Activated CD4-positive, alpha-beta T cell treated with anti-CD3 and anti-CD28 coated beads for 36 hours (primary cell): ENCODE measurements at regions of chr7 and their contacts with region 1.

Region 1: GRCh38 chr7:130912862-130913631 is 179.0 kb upstream of the KLF14 start:
- DNase-seq: peak; percentile 92
- ATAC-seq: peak; percentile 73
- H3K4me3 Mint-ChIP-seq: peak overlapping the region; percentile 88
- H3K27ac Mint-ChIP-seq: peak overlapping the region; percentile 99
- H3K4me1 Mint-ChIP-seq: peaks cover 90% of the 10 kb centered on the region
- H3K27me3 Mint-ChIP-seq: no peaks in the 10 kb centered on the region

Region 2: GRCh38 chr7:130182990-130183389 is 730.1 kb before region 1 on chr7:
- CTCF ChIA-PET with region 1: no interaction called
- POLR2A ChIA-PET with region 1: interaction called, 4 read pairs
- intact Hi-C with region 1: loop called in 1 of 2 experiments (anchors 1 kb)
- DNase-seq: no peak
- ATAC-seq: peak; percentile 38
- H3K4me3 Mint-ChIP-seq: no peak overlapping the region
- H3K27ac Mint-ChIP-seq: peak overlapping the region; percentile 72
- H3K4me1 Mint-ChIP-seq: peaks cover 33% of the 10 kb centered on the region
- H3K27me3 Mint-ChIP-seq: no peaks in the 10 kb centered on the region

Region 3: GRCh38 chr7:130929896-130930659 is 17.0 kb after region 1 on chr7:
- CTCF ChIA-PET with region 1: interaction called, 5 read pairs
- POLR2A ChIA-PET with region 1: interaction called, 14 read pairs
- intact Hi-C with region 1: no loop called
- DNase-seq: no peak
- ATAC-seq: peak; percentile 30
- H3K4me3 Mint-ChIP-seq: peak overlapping the region; percentile 9
- H3K27ac Mint-ChIP-seq: peak overlapping the region; percentile 91
- H3K4me1 Mint-ChIP-seq: peaks cover 92% of the 10 kb centered on the region
- H3K27me3 Mint-ChIP-seq: no peaks in the 10 kb centered on the region

Region 4: DNA sequence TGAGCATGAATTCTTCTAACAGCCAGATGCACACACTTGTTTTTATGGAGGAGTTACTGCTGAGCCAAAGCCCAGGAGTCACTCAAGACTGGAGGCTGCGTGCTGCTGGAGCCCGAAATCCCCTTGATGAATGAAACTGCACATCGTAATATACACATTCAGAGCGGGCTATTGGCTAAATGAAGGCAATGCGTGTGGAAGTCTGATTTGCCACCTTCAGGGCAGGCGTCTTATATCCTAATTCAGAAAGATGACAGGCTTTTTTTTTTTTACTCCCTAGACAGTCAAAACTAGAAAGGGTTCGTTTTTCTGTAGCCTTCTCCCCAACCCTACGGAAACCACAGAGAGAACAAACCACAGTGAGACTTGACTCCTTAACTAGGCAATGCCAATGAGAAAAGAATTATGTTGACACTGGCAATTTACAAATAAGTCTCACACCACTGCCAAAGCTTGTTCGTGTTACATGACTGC is 48.1 kb after region 1 on chr7:
- CTCF ChIA-PET with region 1: interaction called, 23 read pairs
- POLR2A ChIA-PET with region 1: interaction called, 139 read pairs
- intact Hi-C with region 1: loop called (anchors 1 kb)
- DNase-seq: peak; percentile 88
- ATAC-seq: peak; percentile 86
- H3K4me3 Mint-ChIP-seq: no peak overlapping the region
- H3K27ac Mint-ChIP-seq: peak overlapping the region; percentile 100
- H3K4me1 Mint-ChIP-seq: peaks cover 40% of the 10 kb centered on the region
- H3K27me3 Mint-ChIP-seq: no peaks in the 10 kb centered on the region

Region 5: GRCh38 chr7:131040467-131040932 is 127.5 kb after region 1 on chr7:
- CTCF ChIA-PET with region 1: interaction called, 11 read pairs
- POLR2A ChIA-PET with region 1: interaction called, 5 read pairs
- intact Hi-C with region 1: no loop called
- DNase-seq: peak; percentile 63
- ATAC-seq: peak; percentile 68
- H3K4me3 Mint-ChIP-seq: peak overlapping the region; percentile 40
- H3K27ac Mint-ChIP-seq: peak overlapping the region; percentile 82
- H3K4me1 Mint-ChIP-seq: peaks cover 59% of the 10 kb centered on the region
- H3K27me3 Mint-ChIP-seq: no peaks in the 10 kb centered on the region

Region 6: GRCh38 chr7:131327626-131328376 is 414.8 kb after region 1 on chr7 and contains the start of gene MKLN1:
- CTCF ChIA-PET with region 1: no interaction called
- POLR2A ChIA-PET with region 1: no interaction called
- intact Hi-C with region 1: loop called in 1 of 2 experiments (anchors 1 kb)
- DNase-seq: peak; percentile 95
- ATAC-seq: peak; percentile 94
- H3K4me3 Mint-ChIP-seq: peak within 1 kb of the TSS; percentile 94
- H3K27ac Mint-ChIP-seq: peak within 1 kb of the TSS; percentile 97
- H3K4me1 Mint-ChIP-seq: peaks cover 60% of the 10 kb centered on the region
- H3K27me3 Mint-ChIP-seq: no peaks in the 10 kb centered on the region
- total RNA-seq, gene MKLN1: 40.1 to 42.9 TPM

Region 7: GRCh38 chr7:132735476-132735875 is 1822.4 kb after region 1 on chr7:
- CTCF ChIA-PET with region 1: no interaction called
- POLR2A ChIA-PET with region 1: no interaction called
- intact Hi-C with region 1: no loop called
- DNase-seq: no peak
- ATAC-seq: no peak
- H3K4me3 Mint-ChIP-seq: no peak overlapping the region
- H3K27ac Mint-ChIP-seq: no peak overlapping the region
- H3K4me1 Mint-ChIP-seq: no peaks in the 10 kb centered on the region
- H3K27me3 Mint-ChIP-seq: peaks cover 8% of the 10 kb centered on the region